HepG2 (cell line): ENCODE measurements at regions of chr7 and their contacts with region 1.

Region 1: DNA sequence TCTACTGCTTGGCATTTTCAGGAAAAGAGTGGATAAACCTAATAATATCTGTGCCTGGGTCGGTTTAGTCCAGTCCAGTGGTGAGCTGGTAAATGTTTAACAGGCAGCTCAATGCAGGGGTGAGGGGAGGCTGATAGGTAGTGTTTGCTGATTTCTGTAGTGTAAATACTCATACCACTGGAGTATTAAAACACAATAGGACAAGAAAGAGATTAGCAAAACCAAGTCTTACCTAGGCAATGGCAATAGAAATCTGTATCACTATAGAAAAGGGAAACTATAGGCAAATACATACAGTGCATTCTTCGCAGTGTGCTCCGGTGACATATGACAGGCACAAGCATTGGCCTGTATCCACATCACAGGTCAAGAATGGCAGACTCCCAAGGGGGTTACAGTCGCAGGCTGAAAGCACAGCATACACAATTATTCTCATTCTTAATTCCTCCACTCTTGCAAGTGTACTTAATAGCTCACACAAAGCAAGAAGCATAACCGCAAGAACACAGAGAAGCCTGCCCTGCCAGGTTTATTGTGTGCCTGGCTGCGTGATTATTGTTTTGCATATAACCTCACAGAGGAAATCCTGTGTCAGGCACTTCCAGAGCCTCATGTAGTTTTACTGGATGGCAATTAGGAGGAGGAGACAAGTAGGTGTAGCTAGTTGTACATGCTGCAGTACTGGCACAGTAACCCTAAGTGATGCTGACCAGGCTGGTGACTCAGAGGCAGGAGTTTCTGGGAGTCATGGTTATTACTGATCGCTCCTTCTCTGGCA is 35.0 kb downstream of the LAMB4 start:
- DNase-seq: peak; percentile 88
- ATAC-seq: peak; percentile 96
- H3K4me3 ChIP-seq: peak overlapping the region in 1 of 3 experiments; percentile 24; a peak in 1 of 6 replicates
- H3K27ac ChIP-seq: no peak overlapping the region
- H3K4me1 ChIP-seq: peaks cover 49% of the 10 kb centered on the region
- H3K27me3 ChIP-seq: no peaks in the 10 kb centered on the region
- CTCF ChIP-seq: no peak
- EP300 ChIP-seq: peak in 1 of 2 experiments; percentile 56; a peak in 2 of 4 replicates
- POLR2A ChIP-seq: no peak
- RAD21 ChIP-seq: no peak

Region 2: DNA sequence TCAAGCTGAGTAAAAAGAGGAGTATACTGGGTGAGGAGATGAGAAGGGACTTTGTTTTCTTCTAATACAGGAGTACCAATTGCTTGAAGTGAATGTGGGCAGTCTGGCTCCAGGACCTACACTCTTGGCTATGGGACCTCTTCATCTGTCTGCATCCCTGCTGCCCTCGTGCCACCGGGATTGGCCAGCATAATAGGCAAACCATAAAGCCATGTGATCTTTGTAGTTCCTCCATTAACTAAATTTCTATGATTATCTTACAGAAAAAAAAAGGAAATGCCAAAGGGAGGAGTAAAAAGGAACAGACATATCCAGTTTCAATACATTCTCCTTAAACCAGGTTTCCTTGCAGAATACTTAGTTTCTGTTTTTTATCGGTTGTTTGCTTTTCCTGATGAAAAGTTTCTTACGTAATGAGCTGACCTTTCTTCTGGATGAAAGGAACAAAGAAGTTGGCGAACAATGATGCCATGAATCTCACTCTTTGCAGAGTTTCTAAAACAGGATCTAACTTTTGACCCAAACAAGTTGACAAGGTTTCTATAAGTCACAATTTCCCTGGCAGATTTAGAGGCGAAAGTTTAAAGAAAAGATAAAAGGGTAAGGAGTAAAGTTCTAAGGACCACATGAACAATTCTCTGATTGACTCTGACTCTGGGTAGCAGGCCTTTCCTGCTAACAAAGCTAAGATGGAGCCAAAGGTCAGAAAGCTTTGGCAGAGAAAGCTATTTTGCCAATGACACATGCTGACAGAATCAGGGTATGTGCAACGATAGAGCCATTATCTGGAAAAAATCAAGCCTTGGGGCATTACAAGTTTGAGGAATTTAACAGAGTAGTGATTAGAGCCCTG is 146.3 kb before region 1 on chr7:
- CTCF ChIA-PET with region 1: no interaction called
- POLR2A ChIA-PET with region 1: no interaction called
- in situ Hi-C with region 1: no loop called
- intact Hi-C with region 1: loop called (anchors 1 kb)
- DNase-seq: peak; percentile 86
- ATAC-seq: peak; percentile 80
- H3K4me3 ChIP-seq: no peak overlapping the region; a peak in 1 of 6 replicates
- H3K27ac ChIP-seq: peak overlapping the region; percentile 60
- H3K4me1 ChIP-seq: peaks cover 57% of the 10 kb centered on the region
- H3K27me3 ChIP-seq: no peaks in the 10 kb centered on the region
- CTCF ChIP-seq: no peak
- EP300 ChIP-seq: peak in 1 of 2 experiments; percentile 71; a peak in 1 of 4 replicates
- POLR2A ChIP-seq: no peak
- RAD21 ChIP-seq: no peak

Region 3: DNA sequence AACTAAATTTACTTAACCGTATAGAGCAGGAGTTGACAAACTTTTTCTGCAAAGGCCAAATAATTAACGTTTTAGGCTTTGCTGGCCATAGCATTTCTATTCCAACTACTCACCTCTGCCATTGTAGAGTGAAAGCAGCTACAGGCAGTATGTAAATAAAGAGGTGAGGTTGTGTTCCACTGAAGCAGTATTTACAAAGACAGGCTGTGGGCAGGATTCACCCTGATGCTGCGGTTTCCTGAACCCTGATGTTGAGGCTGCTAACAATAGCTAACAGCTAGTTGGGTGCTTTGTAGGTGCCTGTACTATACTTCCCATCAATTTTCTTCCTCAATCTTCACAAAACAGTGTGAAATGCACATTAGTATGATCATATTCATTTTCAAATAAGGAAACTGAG is 45.2 kb before region 1 on chr7:
- CTCF ChIA-PET with region 1: no interaction called
- POLR2A ChIA-PET with region 1: no interaction called
- in situ Hi-C with region 1: no loop called
- intact Hi-C with region 1: loop called (anchors 5 kb)
- DNase-seq: peak; percentile 59
- ATAC-seq: peak; percentile 79
- H3K4me3 ChIP-seq: no peak overlapping the region
- H3K27ac ChIP-seq: no peak overlapping the region
- H3K4me1 ChIP-seq: peaks cover 25% of the 10 kb centered on the region
- H3K27me3 ChIP-seq: no peaks in the 10 kb centered on the region
- CTCF ChIP-seq: no peak
- EP300 ChIP-seq: no peak
- POLR2A ChIP-seq: no peak
- RAD21 ChIP-seq: no peak

Region 4: DNA sequence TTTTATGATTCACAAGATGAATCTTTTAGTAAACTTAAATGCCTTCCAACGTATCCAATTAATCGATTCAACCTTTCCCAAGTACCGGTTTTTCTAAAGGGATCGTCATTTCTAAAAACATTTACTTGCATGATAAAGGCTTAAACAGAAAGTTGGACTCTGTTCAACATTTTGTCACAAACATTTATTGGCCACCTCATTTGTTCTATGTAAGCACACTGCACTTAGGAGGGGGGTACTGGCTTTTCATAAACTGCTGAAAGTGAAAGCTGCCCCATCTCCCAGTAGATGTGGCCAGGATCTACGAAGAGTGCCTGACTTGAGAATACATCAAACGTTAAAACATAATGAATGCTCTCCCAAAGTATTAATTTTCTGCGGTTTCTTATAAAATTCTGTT is 72.3 kb after region 1 on chr7:
- CTCF ChIA-PET with region 1: no interaction called
- POLR2A ChIA-PET with region 1: no interaction called
- in situ Hi-C with region 1: no loop called
- intact Hi-C with region 1: no loop called
- DNase-seq: no peak
- ATAC-seq: no peak
- H3K4me3 ChIP-seq: no peak overlapping the region
- H3K27ac ChIP-seq: no peak overlapping the region
- H3K4me1 ChIP-seq: no peaks in the 10 kb centered on the region
- H3K27me3 ChIP-seq: no peaks in the 10 kb centered on the region
- CTCF ChIP-seq: no peak
- EP300 ChIP-seq: no peak
- POLR2A ChIP-seq: no peak
- RAD21 ChIP-seq: no peak